A673 (cell line): ENCODE measurements at regions of chr10 and their contacts with region 1.

Region 1: DNA sequence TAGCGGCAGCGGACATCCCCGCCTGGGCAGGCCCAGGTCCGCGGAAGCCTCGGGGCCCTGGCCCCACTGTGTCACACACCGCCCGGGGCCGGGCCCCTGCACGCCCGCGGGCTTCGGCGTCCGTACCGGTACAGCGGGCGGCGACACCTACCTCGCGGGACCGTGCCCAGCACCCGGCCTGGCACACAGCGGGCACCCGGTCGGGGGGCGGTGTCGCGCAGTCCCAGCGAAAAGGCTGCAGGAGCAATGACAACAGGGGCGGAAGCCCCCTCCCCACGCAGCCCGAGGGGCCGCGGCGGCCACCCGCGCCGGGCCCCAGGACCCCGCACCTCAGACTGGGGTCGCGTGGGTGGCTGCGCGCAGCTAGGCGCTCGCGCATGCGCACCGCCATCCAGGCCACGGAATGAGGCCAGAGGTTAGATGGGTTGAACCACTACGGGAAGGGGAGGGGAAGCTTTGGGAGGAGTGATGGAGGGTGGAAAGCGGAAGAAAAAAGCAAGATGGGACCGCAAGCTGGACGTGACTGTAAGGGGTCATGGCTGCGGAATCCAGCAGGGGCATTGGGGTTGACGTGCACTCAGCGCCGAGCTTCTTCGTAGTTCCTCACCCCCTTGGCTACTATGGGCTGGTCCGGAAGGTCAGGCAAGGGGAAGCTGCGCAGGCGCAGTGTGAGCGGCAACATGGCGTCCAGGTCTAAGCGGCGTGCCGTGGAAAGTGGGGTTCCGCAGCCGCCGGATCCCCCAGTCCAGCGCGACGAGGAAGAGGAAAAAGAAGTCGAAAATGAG is at the starts of genes BCCIP and UROS:
- DNase-seq: peak; percentile 92
- H3K4me3 ChIP-seq: peak within 1 kb of the TSS; percentile 80
- H3K27ac ChIP-seq: peak within 1 kb of the TSS; percentile 99
- H3K4me1 ChIP-seq: peaks cover 8% of the 10 kb centered on the region
- H3K27me3 ChIP-seq: no peaks in the 10 kb centered on the region
- CTCF ChIP-seq: no peak
- total RNA-seq, gene BCCIP: 95.9 and 113 TPM in 2 replicates
- total RNA-seq, gene UROS: 65.6 and 70.7 TPM in 2 replicates

Region 2: GRCh38 chr10:125808047-125808446 is 15.0 kb before region 1 on chr10:
- CTCF ChIA-PET with region 1: no interaction called
- POLR2A ChIA-PET with region 1: interaction called, 16 read pairs
- intact Hi-C with region 1: no loop called
- DNase-seq: no peak
- H3K4me3 ChIP-seq: no peak overlapping the region
- H3K27ac ChIP-seq: no peak overlapping the region
- H3K4me1 ChIP-seq: peaks cover 4% of the 10 kb centered on the region
- H3K27me3 ChIP-seq: no peaks in the 10 kb centered on the region
- CTCF ChIP-seq: no peak

Region 3: GRCh38 chr10:126252884-126253618 is 430.0 kb after region 1 on chr10:
- CTCF ChIA-PET with region 1: no interaction called
- POLR2A ChIA-PET with region 1: interaction called, 10 read pairs
- intact Hi-C with region 1: no loop called
- DNase-seq: peak; percentile 21
- H3K4me3 ChIP-seq: no peak overlapping the region
- H3K27ac ChIP-seq: no peak overlapping the region
- H3K4me1 ChIP-seq: no peaks in the 10 kb centered on the region
- H3K27me3 ChIP-seq: no peaks in the 10 kb centered on the region
- CTCF ChIP-seq: no peak